ENCODE measurements at regions of chr3 and their contacts with region 1.

Region 1: GRCh38 chr3:49673715-49674496 is at the start of gene APEH:
- DNase-seq: peak; percentile 98
- H3K4me3 ChIP-seq: peak within 1 kb of the TSS; percentile 74 to 95 (median 92)
- H3K27ac ChIP-seq: peak within 1 kb of the TSS; percentile 73
- H3K4me1 ChIP-seq: peaks cover 18% of the 10 kb centered on the region
- H3K27me3 ChIP-seq: no peaks in the 10 kb centered on the region
- CTCF ChIP-seq: no peak
- total RNA-seq, gene APEH: 130 to 183 TPM

Region 2: GRCh38 chr3:49057268-49057667 is 616.6 kb before region 1 on chr3:
- CTCF ChIA-PET with region 1: no interaction called
- dilution Hi-C with region 1: no loop called
- in situ Hi-C with region 1: no loop called
- intact Hi-C with region 1: no loop called
- DNase-seq: no peak
- H3K4me3 ChIP-seq: no peak overlapping the region
- H3K27ac ChIP-seq: no peak overlapping the region
- H3K4me1 ChIP-seq: no peaks in the 10 kb centered on the region
- H3K27me3 ChIP-seq: no peaks in the 10 kb centered on the region
- CTCF ChIP-seq: no peak

Region 3: DNA sequence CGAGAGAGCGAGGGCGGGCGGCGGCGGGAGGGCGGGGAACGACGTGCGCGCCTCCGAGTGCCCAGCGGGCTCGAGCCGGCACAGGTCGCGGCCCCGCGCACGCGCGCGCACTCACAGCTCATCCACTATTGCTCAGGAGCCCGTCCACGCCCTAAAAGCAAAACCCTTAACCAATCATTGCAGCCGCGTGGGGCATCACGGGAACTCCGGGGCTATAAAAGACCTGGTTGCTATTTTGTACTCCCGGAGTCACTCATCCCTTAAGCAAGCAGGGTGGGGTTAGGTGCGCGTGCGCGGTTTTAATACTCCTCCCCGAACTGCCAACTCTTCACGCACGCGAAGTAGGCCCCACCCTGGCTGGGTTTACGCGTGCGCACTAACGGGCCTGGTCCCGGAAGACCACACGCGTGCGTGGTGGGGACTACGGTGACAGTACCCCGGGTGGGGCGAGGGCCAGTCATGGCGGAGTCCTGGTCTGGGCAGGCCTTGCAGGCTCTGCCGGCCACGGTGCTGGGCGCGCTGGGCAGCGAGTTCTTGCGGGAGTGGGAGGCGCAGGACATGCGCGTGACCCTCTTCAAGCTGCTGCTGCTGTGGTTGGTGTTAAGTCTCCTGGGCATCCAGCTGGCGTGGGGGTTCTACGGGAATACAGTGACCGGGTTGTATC is 261.8 kb before region 1 on chr3 and contains the starts of genes RHOA and TCTA:
- CTCF ChIA-PET with region 1: no interaction called
- dilution Hi-C with region 1: loop called (anchors 5 kb)
- in situ Hi-C with region 1: no loop called
- intact Hi-C with region 1: loop called (anchors 5 kb)
- DNase-seq: peak; percentile 100
- H3K4me3 ChIP-seq: peak within 1 kb of the TSS; percentile 86 to 94 (median 90)
- H3K27ac ChIP-seq: peak within 1 kb of the TSS; percentile 91
- H3K4me1 ChIP-seq: peaks cover 35% of the 10 kb centered on the region
- H3K27me3 ChIP-seq: no peaks in the 10 kb centered on the region
- CTCF ChIP-seq: no peak
- total RNA-seq, gene RHOA: 406 to 421 TPM
- total RNA-seq, gene TCTA: 17.3 to 21.7 TPM

Region 4: DNA sequence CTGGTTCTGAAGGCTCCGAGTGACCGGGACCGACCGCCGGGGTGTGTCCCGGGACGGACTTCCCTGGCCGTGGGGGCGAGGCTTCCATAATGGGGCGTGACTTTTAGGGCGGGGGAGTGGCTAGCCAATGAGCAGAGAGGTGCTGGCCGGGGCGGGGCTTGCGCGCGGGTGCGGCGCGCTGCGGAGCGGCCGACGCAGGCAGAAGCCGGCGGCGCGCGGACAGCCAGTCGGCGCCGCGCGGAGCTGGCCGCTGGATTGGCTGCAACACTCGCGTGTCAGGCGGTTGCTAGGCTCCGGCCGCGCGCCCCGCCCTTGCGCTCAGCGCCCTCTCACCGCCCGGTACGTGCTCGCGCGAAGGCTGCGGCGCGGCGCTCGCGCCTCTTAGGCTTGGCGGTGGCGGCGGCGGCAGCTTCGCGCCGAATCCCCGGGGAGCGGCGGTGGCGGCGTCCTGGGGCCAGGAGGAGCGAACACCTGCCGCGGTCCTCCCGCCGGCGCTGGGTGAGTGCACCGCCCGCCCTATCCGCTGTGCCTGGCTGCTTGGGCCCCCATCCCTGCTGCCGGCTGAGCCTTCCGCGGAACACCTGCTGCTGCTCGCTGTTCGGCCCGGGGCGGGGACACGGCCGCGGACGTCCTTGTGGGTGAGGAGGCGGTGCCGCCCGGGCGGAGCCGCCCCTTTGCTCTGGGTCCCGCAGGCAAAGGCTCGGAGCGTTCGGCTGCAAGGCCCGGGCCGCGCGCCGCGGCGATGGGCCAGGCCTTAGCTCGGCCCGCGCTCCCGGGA is 203.8 kb before region 1 on chr3 and contains the start of gene DAG1:
- CTCF ChIA-PET with region 1: no interaction called
- dilution Hi-C with region 1: no loop called
- in situ Hi-C with region 1: no loop called
- intact Hi-C with region 1: loop called (anchors 1 kb)
- DNase-seq: peak; percentile 97
- H3K4me3 ChIP-seq: peak within 1 kb of the TSS; percentile 62 to 98 (median 86)
- H3K27ac ChIP-seq: peak within 1 kb of the TSS; percentile 81
- H3K4me1 ChIP-seq: peaks cover 29% of the 10 kb centered on the region
- H3K27me3 ChIP-seq: no peaks in the 10 kb centered on the region
- CTCF ChIP-seq: no peak
- total RNA-seq, gene DAG1: 68.9 to 162 TPM

Region 5: GRCh38 chr3:49554633-49555265 is 119.2 kb before region 1 on chr3:
- CTCF ChIA-PET with region 1: no interaction called
- dilution Hi-C with region 1: loop called (anchors 5 kb)
- in situ Hi-C with region 1: loop called in 1 of 2 experiments (anchors 10 kb)
- intact Hi-C with region 1: no loop called
- DNase-seq: peak; percentile 28
- H3K4me3 ChIP-seq: peak overlapping the region in 2 of 3 experiments; percentile 50 to 58
- H3K27ac ChIP-seq: no peak overlapping the region
- H3K4me1 ChIP-seq: no peaks in the 10 kb centered on the region
- H3K27me3 ChIP-seq: no peaks in the 10 kb centered on the region
- CTCF ChIP-seq: no peak

Region 6: DNA sequence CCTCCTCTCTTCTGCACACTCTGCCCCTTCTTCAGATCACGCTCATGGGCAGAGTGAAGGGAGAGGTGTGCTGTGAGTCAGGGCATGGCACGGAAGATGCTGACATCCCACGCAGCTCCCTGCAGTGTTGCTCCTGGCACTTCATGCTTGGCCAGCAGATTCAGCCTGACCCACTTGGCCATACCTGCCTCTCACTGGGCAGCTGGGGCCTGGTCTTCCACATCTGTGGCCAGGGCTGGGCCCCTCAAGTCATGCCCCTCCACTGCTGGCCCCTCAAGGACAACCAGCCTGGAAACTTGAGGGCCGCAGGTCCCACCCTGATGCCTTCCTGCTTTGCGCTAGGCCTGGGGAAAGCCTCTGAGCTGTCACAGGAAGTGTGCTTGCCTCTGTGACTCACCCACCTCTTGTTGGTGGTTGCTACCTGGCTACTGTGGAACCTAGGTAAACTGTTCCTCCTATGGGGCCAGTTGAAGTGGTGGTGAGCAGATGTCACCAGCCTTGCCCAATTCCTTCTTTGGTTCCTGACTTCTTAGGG is 71.0 kb before region 1 on chr3:
- CTCF ChIA-PET with region 1: no interaction called
- dilution Hi-C with region 1: no loop called
- in situ Hi-C with region 1: no loop called
- intact Hi-C with region 1: loop called (anchors 5 kb)
- DNase-seq: peak; percentile 83
- H3K4me3 ChIP-seq: no peak overlapping the region
- H3K27ac ChIP-seq: peak overlapping the region; percentile 24
- H3K4me1 ChIP-seq: peaks cover 20% of the 10 kb centered on the region
- H3K27me3 ChIP-seq: no peaks in the 10 kb centered on the region
- CTCF ChIP-seq: no peak

Region 7: DNA sequence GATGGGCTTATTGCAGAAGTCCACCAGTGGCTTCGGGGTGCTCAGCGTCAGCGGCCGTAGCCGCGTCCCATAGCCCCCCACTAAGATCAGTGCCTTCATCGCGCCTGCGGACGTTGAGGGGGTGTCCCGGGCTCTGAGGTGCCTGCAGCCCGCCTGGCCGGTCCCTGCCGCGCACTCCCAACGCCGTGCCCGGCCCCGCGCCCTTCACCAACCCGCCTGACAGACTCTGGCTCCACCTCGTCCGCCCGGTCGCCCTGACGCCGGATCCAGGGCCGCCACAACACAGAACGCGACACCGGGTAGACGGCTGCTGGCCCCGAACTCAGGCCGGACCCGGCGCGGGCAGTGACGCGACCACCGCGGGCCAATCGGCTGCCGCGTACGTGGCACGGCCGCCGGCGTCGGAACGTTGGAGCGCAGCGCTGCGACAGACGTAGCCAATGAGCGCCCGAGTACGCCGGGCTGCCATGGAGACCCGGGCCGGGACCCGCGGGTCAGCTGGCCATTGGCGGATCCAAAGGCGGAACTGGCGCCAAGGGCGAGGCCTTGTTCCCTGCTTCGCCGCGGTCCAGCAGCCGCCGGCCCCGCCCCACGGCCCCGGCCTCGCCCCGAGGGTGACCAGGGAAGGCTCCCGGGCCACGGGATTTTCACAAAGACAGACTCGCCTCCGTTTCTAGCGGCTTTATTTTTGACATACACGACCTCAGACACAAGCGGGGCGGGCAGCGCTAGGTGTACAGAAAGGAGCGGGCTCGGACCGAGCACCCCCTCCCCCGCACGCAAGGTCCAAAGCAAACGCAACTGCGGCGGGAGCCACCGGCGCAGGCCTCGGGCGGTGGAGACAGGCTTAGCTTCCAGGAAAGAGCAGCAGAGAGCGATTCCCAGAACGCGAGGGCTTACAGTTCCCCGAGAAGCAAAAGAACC is 50.0 kb after region 1 on chr3 and contains the start of gene GMPPB:
- CTCF ChIA-PET with region 1: no interaction called
- dilution Hi-C with region 1: loop called (anchors 5 kb)
- in situ Hi-C with region 1: no loop called
- intact Hi-C with region 1: no loop called
- DNase-seq: peak; percentile 97
- H3K4me3 ChIP-seq: peak within 1 kb of the TSS; percentile 51 to 85 (median 84)
- H3K27ac ChIP-seq: peak within 1 kb of the TSS; percentile 92
- H3K4me1 ChIP-seq: peaks cover 25% of the 10 kb centered on the region
- H3K27me3 ChIP-seq: no peaks in the 10 kb centered on the region
- CTCF ChIP-seq: no peak
- total RNA-seq, gene GMPPB: 19.2 to 38.4 TPM